Posterior cingulate gyrus (tissue), 11 donors: ENCODE measurements at regions of chr3 and their contacts with region 1.

Region 1: GRCh38 chr3:16600780-16601539 is 4.3 kb downstream of the DAZL start:
- DNase-seq: peak; percentile 35 to 94 (median 80)

Region 2: DNA sequence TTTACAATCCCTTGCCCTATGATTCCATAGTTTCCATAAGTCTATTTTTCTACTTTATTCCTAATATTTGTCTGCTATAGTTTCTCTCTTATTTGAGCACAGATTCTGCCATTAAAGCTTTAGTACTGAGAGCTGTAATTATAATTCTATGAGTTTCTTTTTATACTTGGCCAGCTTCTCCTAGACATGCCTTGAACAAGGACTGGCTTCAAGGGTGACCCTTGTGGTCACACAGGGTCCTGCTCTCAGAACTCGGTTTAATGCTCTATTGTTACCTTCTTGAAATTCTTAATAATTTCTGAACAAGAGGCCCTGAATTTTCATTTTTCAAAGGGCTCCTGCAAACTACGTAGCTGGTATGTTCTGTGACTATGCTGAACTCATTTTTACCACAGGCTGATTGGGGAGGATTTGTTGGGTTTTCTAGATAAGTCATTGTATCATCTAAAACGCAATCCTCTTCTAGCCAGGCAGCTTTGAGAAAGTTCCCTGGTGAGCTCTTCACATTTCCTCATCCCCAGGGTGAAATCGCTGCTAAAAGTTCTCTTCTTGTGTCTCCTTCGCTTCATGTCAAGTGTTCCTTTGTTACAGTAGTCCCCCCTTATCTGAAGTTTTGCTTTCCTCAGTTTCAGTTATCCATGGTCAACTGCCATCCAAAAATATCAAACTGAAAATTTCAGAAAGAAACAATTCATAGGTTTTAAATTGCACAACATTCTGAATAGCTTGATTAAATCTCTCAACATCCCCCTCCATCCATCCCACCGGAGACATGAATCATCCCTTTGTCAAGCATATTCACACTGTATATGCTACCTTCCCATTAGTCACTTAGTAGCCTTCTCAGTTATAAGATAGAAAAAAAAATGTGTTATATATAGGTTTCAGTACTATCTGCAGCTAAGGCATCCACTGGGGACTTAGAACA is 271.2 kb after region 1 on chr3:
- intact Hi-C with region 1: no loop called
- DNase-seq: no peak

Region 3: DNA sequence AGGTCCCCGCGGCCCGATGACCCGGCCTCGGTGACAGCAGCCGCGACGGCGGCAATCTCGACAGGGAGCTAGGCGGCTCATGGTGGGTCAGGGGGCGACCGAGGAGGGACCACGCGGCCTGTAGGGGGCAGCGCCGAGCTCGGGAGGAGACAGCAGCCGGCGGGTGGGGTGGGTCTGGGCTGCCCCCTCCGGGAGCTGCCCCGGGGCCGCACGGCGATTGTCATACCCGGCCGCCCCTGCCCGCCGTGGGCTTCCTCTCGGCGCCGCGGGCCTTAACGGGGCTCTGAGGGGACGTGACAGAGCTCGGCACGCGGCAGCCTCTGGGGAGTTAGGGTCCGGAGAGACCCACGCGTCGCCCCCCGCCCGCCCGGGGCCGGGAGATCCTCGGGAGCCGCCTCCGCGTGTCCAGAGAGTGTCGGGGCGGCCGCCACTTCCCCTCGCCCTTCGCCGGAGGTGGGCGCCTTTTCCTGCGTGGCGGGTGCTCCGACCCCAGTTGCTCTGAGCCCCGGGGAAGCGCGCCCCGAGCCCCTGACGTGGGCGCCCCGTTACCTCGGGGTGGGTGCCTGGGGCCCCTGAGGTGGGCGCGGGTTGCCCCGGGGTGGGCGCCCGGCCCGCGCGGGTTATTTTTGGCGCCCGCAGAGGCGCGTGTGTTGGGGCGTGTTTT is 283.3 kb after region 1 on chr3:
- intact Hi-C with region 1: loop called (anchors 10 kb)
- DNase-seq: peak; percentile 26 to 91 (median 47)

Region 4: GRCh38 chr3:17233398-17233800 is 632.4 kb after region 1 on chr3:
- intact Hi-C with region 1: loop called (anchors 1 kb)
- DNase-seq: peak in 1 of 10 donors; percentile 15